IMR-90 (cell line): ENCODE measurements at regions of chr11 and their contacts with region 1.

Region 1: DNA sequence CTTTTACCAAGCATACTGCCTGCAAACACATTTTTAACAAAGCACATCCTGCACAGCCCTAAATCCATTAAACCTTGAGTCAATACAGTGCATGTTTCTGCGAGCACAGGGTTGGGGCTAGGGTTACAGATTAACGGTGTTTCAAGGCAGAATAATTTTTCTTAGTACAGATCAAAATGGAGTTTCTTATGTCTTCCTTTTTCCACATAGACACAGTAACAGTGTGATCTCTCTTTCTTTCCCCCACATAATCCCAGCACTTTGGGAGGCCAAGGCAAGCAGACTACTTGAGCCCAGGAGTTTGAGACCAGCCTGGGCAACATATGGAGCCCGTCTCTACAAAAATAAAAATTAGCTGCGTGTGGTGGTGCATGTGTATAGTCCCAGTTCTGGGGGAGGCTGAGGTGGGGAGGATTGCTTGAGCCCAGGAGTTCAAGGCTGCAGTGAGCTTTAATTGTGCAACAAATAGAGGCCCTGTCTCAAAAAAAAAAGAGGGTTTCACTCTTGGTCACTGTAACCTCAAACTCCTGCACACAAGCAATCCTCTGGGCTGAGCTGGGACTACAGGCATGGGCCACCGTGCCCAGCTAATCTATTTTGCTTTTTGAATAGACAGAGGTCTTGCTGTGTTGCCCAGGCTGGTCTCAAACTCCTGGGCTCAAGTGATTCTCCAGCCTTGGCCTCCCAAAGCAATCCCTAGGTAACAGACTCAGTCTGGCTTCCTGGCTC is 19.7 kb upstream of the SLC3A2 start:
- DNase-seq: no peak
- ATAC-seq: no peak
- H3K4me3 ChIP-seq: no peak overlapping the region
- H3K27ac ChIP-seq: no peak overlapping the region
- H3K4me1 ChIP-seq: no peaks in the 10 kb centered on the region
- H3K27me3 ChIP-seq: no peaks in the 10 kb centered on the region
- CTCF ChIP-seq: no peak
- POLR2A ChIP-seq: no peak
- RAD21 ChIP-seq: no peak

Region 2: DNA sequence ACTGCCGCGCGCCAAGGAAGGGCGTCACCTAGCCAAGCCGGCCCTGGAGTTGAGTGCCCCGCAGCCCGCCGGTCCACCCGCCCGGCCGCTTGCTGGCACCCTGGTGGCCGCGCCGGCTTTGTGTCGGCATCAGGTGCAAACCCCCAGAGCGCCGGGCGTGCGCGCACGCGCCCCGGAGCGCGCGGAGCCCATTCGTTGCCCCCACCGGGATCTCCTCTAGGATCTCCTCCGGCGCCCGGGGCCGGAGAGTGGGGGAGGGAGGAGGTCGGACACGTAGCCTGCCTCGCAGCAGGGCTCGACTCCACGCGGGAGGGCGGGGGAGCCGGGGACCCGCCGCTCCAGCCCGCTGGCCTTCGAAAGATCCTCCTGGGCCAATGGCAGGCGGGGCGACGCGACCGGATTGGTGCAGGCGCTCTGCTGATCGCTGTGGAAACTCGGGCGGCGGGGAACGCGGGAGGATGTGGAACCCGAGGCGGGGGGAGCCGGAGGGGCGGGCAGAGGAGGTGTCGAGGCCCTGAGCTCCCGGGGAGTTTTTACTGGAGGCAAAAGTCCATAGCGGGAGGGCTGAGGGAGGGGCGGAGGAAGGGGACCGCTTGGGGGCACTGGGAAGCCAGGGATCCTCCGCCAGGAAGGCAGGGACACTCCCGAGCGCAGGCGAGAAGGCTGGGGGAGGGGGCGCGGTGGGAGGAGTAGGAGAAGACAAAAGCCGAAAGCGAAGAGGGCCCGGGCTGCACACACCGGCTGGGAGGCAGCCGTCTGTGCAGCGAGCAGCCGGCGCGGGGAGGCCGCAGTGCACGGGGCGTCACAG is 1033.2 kb before region 1 on chr11 and contains the start of gene FADS2:
- CTCF ChIA-PET with region 1: no interaction called
- POLR2A ChIA-PET with region 1: no interaction called
- dilution Hi-C with region 1: no loop called
- in situ Hi-C with region 1: no loop called
- intact Hi-C with region 1: no loop called
- DNase-seq: peak; percentile 89
- ATAC-seq: peak; percentile 88
- H3K4me3 ChIP-seq: peak within 1 kb of the TSS; percentile 72
- H3K27ac ChIP-seq: peak within 1 kb of the TSS; percentile 50
- H3K4me1 ChIP-seq: peaks cover 11% of the 10 kb centered on the region; the same call in 1 of the 2 replicates
- H3K27me3 ChIP-seq: no peaks in the 10 kb centered on the region
- CTCF ChIP-seq: no peak
- POLR2A ChIP-seq: peak; percentile 70
- RAD21 ChIP-seq: no peak
- total RNA-seq, gene FADS2: 31.9 and 33.3 TPM in 2 replicates

Region 3: GRCh38 chr11:62612366-62613290 is 248.4 kb before region 1 on chr11 and contains the starts of genes EML3 and ROM1:
- CTCF ChIA-PET with region 1: no interaction called
- POLR2A ChIA-PET with region 1: no interaction called
- dilution Hi-C with region 1: no loop called
- in situ Hi-C with region 1: no loop called
- intact Hi-C with region 1: loop called (anchors 5 kb)
- DNase-seq: peak; percentile 63
- ATAC-seq: peak; percentile 90
- H3K4me3 ChIP-seq: peak within 1 kb of the TSS; percentile 78
- H3K27ac ChIP-seq: peak within 1 kb of the TSS; percentile 70
- H3K4me1 ChIP-seq: peaks cover 10% of the 10 kb centered on the region
- H3K27me3 ChIP-seq: no peaks in the 10 kb centered on the region
- CTCF ChIP-seq: peak; percentile 99
- POLR2A ChIP-seq: no peak
- RAD21 ChIP-seq: peak; percentile 36; the same call in 1 of the 2 replicates
- total RNA-seq, gene EML3: 4.4 and 5.0 TPM in 2 replicates
- total RNA-seq, gene ROM1: 2.2 TPM in 2 replicates